ENCODE measurements at regions of chr1 and their contacts with region 1.

Region 1: GRCh38 chr1:220680085-220680687 is 10.0 kb upstream of the C1orf115 start:
- DNase-seq: no peak
- ATAC-seq: peak; percentile 89 to 92 (median 90)
- H3K4me3 ChIP-seq: no peak overlapping the region
- H3K27ac ChIP-seq: no peak overlapping the region
- H3K4me1 ChIP-seq: peaks cover 0 to 8% (median 4%) of the 10 kb centered on the region in 4 donors
- H3K27me3 ChIP-seq: no peaks in the 10 kb centered on the region
- CTCF ChIP-seq: peak; percentile 72 to 82 (median 73)
- POLR2A ChIP-seq: no peak

Region 2: GRCh38 chr1:220733090-220733601 is 53.0 kb after region 1 on chr1:
- intact Hi-C with region 1: loop called in 1 of 2 experiments (anchors 10 kb)
- DNase-seq: peak; percentile 78 to 87 (median 82)
- ATAC-seq: peak; percentile 89 to 92 (median 91)
- H3K4me3 ChIP-seq: peak overlapping the region; percentile 21 to 43 (median 26)
- H3K27ac ChIP-seq: peak overlapping the region; percentile 56 to 71 (median 64)
- H3K4me1 ChIP-seq: peaks cover 0 to 17% (median 5%) of the 10 kb centered on the region in 4 donors
- H3K27me3 ChIP-seq: no peaks in the 10 kb centered on the region
- CTCF ChIP-seq: peak; percentile 85 to 89 (median 88)
- POLR2A ChIP-seq: no peak

Region 3: GRCh38 chr1:220776720-220777326 is 96.6 kb after region 1 on chr1:
- intact Hi-C with region 1: loop called in 1 of 2 experiments (anchors 5 kb)
- DNase-seq: peak; percentile 87 to 90 (median 88)
- ATAC-seq: peak; percentile 95 to 98 (median 98)
- H3K4me3 ChIP-seq: no peak overlapping the region
- H3K27ac ChIP-seq: no peak overlapping the region
- H3K4me1 ChIP-seq: peaks cover 0 to 4% (median 0%) of the 10 kb centered on the region in 4 donors
- H3K27me3 ChIP-seq: no peaks in the 10 kb centered on the region
- CTCF ChIP-seq: peak; percentile 84 to 96 (median 94)
- POLR2A ChIP-seq: no peak

Region 4: GRCh38 chr1:221149111-221149510 is 468.9 kb after region 1 on chr1:
- intact Hi-C with region 1: no loop called
- DNase-seq: no peak
- ATAC-seq: peak in 1 of 4 donors; percentile 31
- H3K4me3 ChIP-seq: no peak overlapping the region
- H3K27ac ChIP-seq: no peak overlapping the region
- H3K4me1 ChIP-seq: no peaks in the 10 kb centered on the region
- H3K27me3 ChIP-seq: no peaks in the 10 kb centered on the region
- CTCF ChIP-seq: no peak
- POLR2A ChIP-seq: no peak

Measured in right lobe of liver (tissue), 6 donors.